ENCODE measurements at regions of chr12 and their contacts with region 1.

Region 1: DNA sequence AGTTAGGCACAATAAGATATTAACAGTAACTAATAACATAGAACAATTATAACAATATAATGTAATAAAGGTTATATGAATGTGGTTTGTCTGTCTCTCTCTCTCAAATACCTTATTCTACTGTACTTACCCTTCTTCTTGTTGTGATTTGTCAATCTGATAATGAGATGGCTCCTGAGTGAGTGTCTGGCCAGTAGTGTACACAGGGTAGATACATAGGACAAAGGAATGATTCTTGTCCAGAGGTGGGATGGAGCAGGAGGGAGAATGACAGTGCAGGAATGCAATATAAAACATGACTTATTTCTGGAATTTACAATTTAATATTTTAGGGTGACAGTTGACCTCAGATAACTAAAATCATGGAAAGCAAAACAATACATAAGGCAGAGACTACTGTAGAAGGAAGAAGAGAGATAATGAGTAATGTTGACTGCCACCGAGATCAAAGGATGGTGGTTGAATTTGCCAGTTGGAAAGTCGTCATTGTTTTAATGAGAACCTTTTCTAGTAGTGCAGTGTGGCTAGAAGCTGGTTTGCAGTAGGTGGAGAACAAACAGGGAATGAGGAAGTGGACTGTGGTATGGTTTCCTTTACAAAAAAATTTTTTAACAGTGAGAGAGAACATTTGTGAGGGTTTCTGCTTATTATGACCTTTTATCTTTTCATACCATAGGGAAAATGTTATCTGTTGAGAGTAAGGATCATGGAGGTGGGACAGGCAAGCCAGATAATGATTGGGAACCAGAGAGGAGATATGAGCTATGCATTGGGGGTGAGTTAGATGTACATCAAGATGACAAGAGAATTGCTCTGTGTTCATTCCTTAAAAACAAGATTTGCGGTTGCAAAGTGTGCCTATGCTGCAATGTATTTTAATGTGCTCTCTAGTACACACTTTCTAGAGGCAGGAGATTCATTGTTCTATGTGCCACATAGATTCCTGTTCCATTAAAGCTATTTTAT is 458.3 kb downstream of the BTG1 start:
- DNase-seq: no peak
- ATAC-seq: peak; percentile 50
- H3K4me3 ChIP-seq: no peak overlapping the region
- H3K27ac ChIP-seq: peak overlapping the region; percentile 21; the same call in 1 of the 3 replicates
- H3K4me1 ChIP-seq: peaks cover 0 to 18% of the 10 kb centered on the region in 2 experiments; a peak in 3 of 5 replicates
- H3K27me3 ChIP-seq: no peaks in the 10 kb centered on the region
- CTCF ChIP-seq: no peak
- EP300 ChIP-seq: no peak
- POLR2A ChIP-seq: no peak
- RAD21 ChIP-seq: no peak

Region 2: DNA sequence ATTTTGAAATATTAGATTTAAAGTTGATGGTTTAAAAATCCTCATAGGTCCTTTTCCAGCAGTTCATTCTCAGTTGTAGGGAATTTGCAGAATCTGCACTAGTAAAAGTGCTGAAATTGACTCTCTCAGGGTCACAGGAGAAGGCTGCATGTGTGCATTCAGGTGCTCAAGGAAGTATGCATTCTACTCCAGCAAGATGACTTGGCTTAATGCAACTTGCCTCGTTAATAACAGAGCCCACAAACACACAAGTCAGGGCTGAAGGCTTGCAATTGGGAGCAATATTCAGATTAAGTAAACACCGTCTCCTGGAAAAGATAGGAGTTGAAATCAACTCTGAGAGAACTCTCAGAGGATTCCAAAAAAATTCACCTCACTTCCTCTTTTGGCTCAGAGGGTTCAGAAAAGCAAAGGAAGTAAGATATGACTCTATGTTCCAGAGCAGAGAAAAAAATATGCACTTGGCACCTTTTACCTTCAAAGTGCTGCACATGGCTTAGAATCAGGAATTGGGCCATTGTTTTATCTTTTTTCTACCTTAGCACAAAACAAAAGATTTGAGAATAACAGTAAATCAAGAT is 98.4 kb before region 1 on chr12:
- CTCF ChIA-PET with region 1: no interaction called
- POLR2A ChIA-PET with region 1: no interaction called
- in situ Hi-C with region 1: no loop called
- intact Hi-C with region 1: loop called (anchors 10 kb)
- DNase-seq: no peak
- ATAC-seq: no peak; the same call in 2 of the 3 replicates
- H3K4me3 ChIP-seq: no peak overlapping the region
- H3K27ac ChIP-seq: peak overlapping the region; percentile 4; the same call in 1 of the 3 replicates
- H3K4me1 ChIP-seq: peaks cover 0 to 6% of the 10 kb centered on the region in 2 experiments; a peak in 3 of 5 replicates
- H3K27me3 ChIP-seq: no peaks in the 10 kb centered on the region
- CTCF ChIP-seq: no peak
- EP300 ChIP-seq: no peak
- POLR2A ChIP-seq: no peak
- RAD21 ChIP-seq: no peak

Region 3: GRCh38 chr12:91667725-91668124 is 19.6 kb before region 1 on chr12:
- CTCF ChIA-PET with region 1: no interaction called
- POLR2A ChIA-PET with region 1: no interaction called
- in situ Hi-C with region 1: no loop called
- intact Hi-C with region 1: no loop called
- DNase-seq: no peak
- ATAC-seq: no peak
- H3K4me3 ChIP-seq: no peak overlapping the region
- H3K27ac ChIP-seq: no peak overlapping the region
- H3K4me1 ChIP-seq: no peaks in the 10 kb centered on the region
- H3K27me3 ChIP-seq: no peaks in the 10 kb centered on the region
- CTCF ChIP-seq: no peak
- EP300 ChIP-seq: no peak
- POLR2A ChIP-seq: no peak
- RAD21 ChIP-seq: no peak

Measured in K562 (cell line).